CD4-positive, alpha-beta T cell (primary cell): ENCODE measurements at regions of chrX and their contacts with region 1.

Region 1: GRCh38 chrX:48083212-48083611 is 11.8 kb upstream of the ZNF630 start:
- DNase-seq: peak; percentile 12 to 65 (median 29)
- ATAC-seq: peak; percentile 67
- H3K4me3 ChIP-seq: no peak overlapping the region
- H3K4me3 Mint-ChIP-seq: no peak overlapping the region
- H3K27ac ChIP-seq: no peak overlapping the region
- H3K27ac Mint-ChIP-seq: no peak overlapping the region
- H3K4me1 ChIP-seq: no peaks in the 10 kb centered on the region
- H3K4me1 Mint-ChIP-seq: no peaks in the 10 kb centered on the region
- H3K27me3 ChIP-seq: no peaks in the 10 kb centered on the region
- H3K27me3 Mint-ChIP-seq: no peaks in the 10 kb centered on the region
- CTCF ChIP-seq: peak; percentile 51

Region 2: GRCh38 chrX:47475476-47475875 is 607.7 kb before region 1 on chrX:
- CTCF ChIA-PET with region 1: no interaction called
- POLR2A ChIA-PET with region 1: no interaction called
- intact Hi-C with region 1: no loop called
- DNase-seq: no peak
- ATAC-seq: no peak
- H3K4me3 ChIP-seq: no peak overlapping the region
- H3K4me3 Mint-ChIP-seq: no peak overlapping the region
- H3K27ac ChIP-seq: no peak overlapping the region
- H3K27ac Mint-ChIP-seq: no peak overlapping the region
- H3K4me1 ChIP-seq: no peaks in the 10 kb centered on the region
- H3K4me1 Mint-ChIP-seq: peaks cover 42% of the 10 kb centered on the region
- H3K27me3 ChIP-seq: no peaks in the 10 kb centered on the region
- H3K27me3 Mint-ChIP-seq: no peaks in the 10 kb centered on the region
- CTCF ChIP-seq: no peak

Region 3: GRCh38 chrX:48003758-48004457 is 79.3 kb before region 1 on chrX and contains the start of gene ZNF182:
- CTCF ChIA-PET with region 1: no interaction called
- POLR2A ChIA-PET with region 1: no interaction called
- intact Hi-C with region 1: no loop called
- DNase-seq: peak; percentile 84 to 96 (median 90)
- ATAC-seq: peak; percentile 95
- H3K4me3 ChIP-seq: peak within 1 kb of the TSS; percentile 78
- H3K4me3 Mint-ChIP-seq: peak within 1 kb of the TSS; percentile 96
- H3K27ac ChIP-seq: peak within 1 kb of the TSS; percentile 73 to 82
- H3K27ac Mint-ChIP-seq: peak within 1 kb of the TSS; percentile 87
- H3K4me1 ChIP-seq: peaks cover 11% of the 10 kb centered on the region
- H3K4me1 Mint-ChIP-seq: peaks cover 37% of the 10 kb centered on the region
- H3K27me3 ChIP-seq: no peaks in the 10 kb centered on the region
- H3K27me3 Mint-ChIP-seq: no peaks in the 10 kb centered on the region
- CTCF ChIP-seq: no peak
- total RNA-seq, gene ZNF182: 4.8 to 5.0 TPM

Region 4: DNA sequence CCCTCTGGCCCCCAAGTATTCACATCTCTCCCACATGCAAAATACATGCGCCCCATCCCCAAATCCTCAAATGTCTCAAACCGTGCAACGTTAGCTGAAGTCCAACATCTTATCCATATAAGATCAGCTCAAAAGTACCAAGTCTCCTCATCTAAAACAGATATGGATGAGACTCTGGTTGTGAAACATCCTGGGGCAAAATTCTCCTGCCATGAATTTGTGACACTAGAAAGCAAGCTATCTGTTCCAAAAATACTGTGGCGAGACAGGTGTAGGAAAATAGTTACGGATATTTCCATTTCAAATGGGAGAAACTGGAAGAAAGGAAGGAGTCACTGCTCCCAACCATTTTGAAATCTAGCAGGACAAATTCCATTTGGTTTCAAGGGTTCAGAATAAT is 60.4 kb after region 1 on chrX:
- CTCF ChIA-PET with region 1: no interaction called
- POLR2A ChIA-PET with region 1: no interaction called
- intact Hi-C with region 1: loop called in 1 of 2 experiments (anchors 10 kb)
- DNase-seq: no peak
- ATAC-seq: no peak
- H3K4me3 ChIP-seq: no peak overlapping the region
- H3K4me3 Mint-ChIP-seq: no peak overlapping the region
- H3K27ac ChIP-seq: no peak overlapping the region
- H3K27ac Mint-ChIP-seq: no peak overlapping the region
- H3K4me1 ChIP-seq: peaks cover 3% of the 10 kb centered on the region
- H3K4me1 Mint-ChIP-seq: peaks cover 22% of the 10 kb centered on the region
- H3K27me3 ChIP-seq: no peaks in the 10 kb centered on the region
- H3K27me3 Mint-ChIP-seq: no peaks in the 10 kb centered on the region
- CTCF ChIP-seq: no peak

Region 5: DNA sequence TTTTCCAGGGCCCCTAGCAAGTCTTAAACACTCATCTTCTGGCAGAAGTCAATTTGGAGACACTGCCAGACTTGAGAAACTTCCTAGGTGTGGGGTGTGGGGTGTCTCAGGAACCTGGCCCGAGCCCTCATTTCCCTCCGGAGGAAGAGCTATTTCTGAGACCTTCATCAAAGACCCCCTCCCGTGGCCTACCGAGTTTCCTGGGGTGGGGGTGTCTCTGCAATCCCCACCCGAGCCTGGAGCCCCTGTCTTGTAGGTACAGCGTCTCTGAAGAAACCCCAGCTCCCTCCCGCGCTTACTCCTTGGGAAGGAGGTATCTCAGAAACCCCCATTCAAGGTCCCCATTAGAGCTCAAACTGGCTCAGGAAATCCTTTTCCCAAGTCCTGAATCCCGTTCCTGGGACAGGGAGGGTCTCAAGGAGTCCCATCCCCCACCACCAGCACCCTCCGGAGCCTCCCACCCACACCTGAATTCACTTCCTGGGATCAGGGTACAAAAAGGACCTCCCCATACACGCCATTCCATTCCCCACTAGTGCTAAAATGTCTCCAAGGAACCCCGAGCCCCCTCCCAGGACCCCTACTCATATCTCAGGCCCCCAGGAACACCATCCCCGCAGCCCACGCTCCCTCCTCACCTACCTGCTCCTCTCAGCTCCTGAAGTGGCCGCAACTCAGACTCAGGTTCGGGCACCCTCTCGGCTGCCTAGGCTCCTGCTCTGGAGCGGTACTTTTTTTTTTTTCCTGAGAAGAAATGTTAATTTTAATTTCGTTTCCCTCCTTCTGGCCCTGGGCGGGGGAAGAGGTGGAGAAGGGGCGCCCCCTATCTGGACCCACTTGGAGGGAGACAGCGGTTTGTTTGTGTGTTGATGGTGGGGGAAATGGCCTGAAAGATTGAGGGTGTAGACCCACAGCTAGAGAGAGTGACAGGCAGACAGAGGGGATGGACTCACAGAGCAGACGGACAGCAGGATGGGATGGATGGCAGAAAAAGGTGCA is 385.8 kb after region 1 on chrX:
- CTCF ChIA-PET with region 1: no interaction called
- POLR2A ChIA-PET with region 1: interaction called, 3 read pairs
- intact Hi-C with region 1: loop called in 1 of 2 experiments (anchors 5 kb)
- DNase-seq: peak in 10 of 14 experiments; percentile 21 to 63 (median 42)
- ATAC-seq: peak; percentile 45
- H3K4me3 ChIP-seq: peak overlapping the region; percentile 73
- H3K4me3 Mint-ChIP-seq: peak overlapping the region; percentile 94
- H3K27ac ChIP-seq: no peak overlapping the region
- H3K27ac Mint-ChIP-seq: peak overlapping the region; percentile 75
- H3K4me1 ChIP-seq: peaks cover 25% of the 10 kb centered on the region
- H3K4me1 Mint-ChIP-seq: peaks cover 40% of the 10 kb centered on the region
- H3K27me3 ChIP-seq: no peaks in the 10 kb centered on the region
- H3K27me3 Mint-ChIP-seq: no peaks in the 10 kb centered on the region
- CTCF ChIP-seq: peak; percentile 33